GM10248 (cell line): ENCODE measurements at regions of chr9 and their contacts with region 1.

Region 1: GRCh38 chr9:75200892-75201470 is 112.7 kb downstream of the OSTF1 start:
- DNase-seq: peak; percentile 31
- CTCF ChIP-seq: peak; percentile 58

Region 2: GRCh38 chr9:74985041-74985440 is 215.9 kb before region 1 on chr9:
- CTCF ChIA-PET with region 1: no interaction called
- POLR2A ChIA-PET with region 1: no interaction called
- DNase-seq: no peak
- CTCF ChIP-seq: no peak

Region 3: GRCh38 chr9:75156858-75157257 is 44.1 kb before region 1 on chr9:
- CTCF ChIA-PET with region 1: no interaction called
- POLR2A ChIA-PET with region 1: no interaction called
- DNase-seq: no peak
- CTCF ChIP-seq: no peak

Region 4: GRCh38 chr9:75238311-75238978 is 37.5 kb after region 1 on chr9:
- CTCF ChIA-PET with region 1: interaction called, 16 read pairs
- POLR2A ChIA-PET with region 1: no interaction called
- DNase-seq: peak; percentile 39
- CTCF ChIP-seq: peak; percentile 46